Naive thymus-derived CD4-positive, alpha-beta T cell (primary cell): ENCODE measurements at regions of chr3 and their contacts with region 1.

Region 1: DNA sequence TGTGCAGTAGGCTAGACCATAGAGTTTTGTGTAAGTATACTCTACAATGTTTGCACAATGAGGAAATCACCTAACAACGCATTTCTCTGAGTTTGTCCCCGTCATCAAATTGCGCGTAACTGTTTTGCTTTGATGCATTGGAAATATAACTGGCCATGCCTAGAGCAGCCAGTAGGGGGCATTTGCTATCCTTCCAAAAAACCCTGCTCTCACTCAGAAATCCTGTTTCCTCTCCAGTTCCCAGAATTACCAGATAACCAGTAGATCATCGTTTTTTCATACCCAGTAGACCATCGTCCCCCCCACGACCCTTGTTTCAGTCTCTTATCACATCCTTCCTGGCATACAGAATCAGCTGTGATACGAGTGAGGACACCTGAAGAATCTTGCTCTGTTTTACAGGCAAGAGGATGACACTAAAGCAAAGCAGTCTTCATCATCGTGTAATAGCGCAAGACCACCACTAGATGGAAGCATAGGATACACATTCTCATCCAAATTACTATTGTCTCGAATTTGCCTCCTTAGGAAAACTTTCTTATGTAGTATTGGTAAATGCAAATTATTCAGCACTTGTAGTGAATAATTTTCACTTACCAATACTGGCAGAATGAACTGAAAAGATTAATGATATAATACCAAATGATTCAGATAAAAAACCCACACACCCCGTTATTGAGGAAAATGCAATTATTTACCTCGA is 4.4 kb upstream of the GABRR3 start:
- DNase-seq: peak; percentile 51 to 91 (median 89)
- ATAC-seq: peak; percentile 98
- H3K4me3 ChIP-seq: peak overlapping the region; percentile 59
- H3K4me3 Mint-ChIP-seq: peak overlapping the region; percentile 11 to 95 (median 85)
- H3K27ac ChIP-seq: peak overlapping the region; percentile 75
- H3K27ac Mint-ChIP-seq: peak overlapping the region; percentile 57 to 99 (median 94)
- H3K4me1 ChIP-seq: no peaks in the 10 kb centered on the region
- H3K4me1 Mint-ChIP-seq: peaks cover 0 to 22% (median 0%) of the 10 kb centered on the region in 7 donors
- H3K27me3 ChIP-seq: peaks cover 0 to 3% of the 10 kb centered on the region in 2 donors
- H3K27me3 Mint-ChIP-seq: peaks cover 0 to 43% (median 17%) of the 10 kb centered on the region in 5 donors

Region 2: DNA sequence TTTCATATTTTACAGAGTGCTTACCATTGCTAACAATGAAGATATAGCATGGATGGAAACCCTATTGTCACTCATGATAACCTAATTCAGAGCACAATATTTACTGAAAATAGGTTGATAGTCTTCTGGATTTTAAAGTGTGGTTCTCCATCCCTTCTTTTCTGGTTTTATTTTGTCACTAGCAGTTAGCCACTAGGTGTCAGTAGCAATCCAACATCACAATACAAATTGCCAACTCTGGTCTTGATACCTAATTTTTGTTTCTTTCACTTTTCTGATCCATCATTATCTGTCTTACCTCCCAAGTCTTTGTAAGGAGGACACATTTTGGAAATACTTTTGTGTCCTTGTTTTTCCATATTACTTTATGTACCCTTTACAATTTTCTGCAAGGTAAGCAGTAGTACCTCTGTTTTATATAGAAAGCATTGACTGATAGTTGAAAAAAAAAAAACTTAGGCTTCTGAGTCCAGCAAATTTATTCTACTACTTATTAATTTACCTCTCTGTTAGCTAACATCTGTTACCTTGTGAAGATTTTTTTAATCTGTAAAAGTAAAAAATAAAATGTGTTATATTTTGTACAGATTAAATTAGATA is 246.0 kb before region 1 on chr3:
- CTCF ChIA-PET with region 1: no interaction called
- POLR2A ChIA-PET with region 1: no interaction called
- intact Hi-C with region 1: loop called in 1 of 2 experiments (anchors 1 kb)
- DNase-seq: peak in 7 of 9 donors; percentile 30 to 67 (median 61)
- ATAC-seq: peak; percentile 80
- H3K4me3 ChIP-seq: no peak overlapping the region
- H3K4me3 Mint-ChIP-seq: no peak overlapping the region
- H3K27ac ChIP-seq: no peak overlapping the region
- H3K27ac Mint-ChIP-seq: no peak overlapping the region
- H3K4me1 ChIP-seq: no peaks in the 10 kb centered on the region
- H3K4me1 Mint-ChIP-seq: peaks cover 0 to 3% (median 0%) of the 10 kb centered on the region in 7 donors
- H3K27me3 ChIP-seq: no peaks in the 10 kb centered on the region
- H3K27me3 Mint-ChIP-seq: no peaks in the 10 kb centered on the region

Region 3: DNA sequence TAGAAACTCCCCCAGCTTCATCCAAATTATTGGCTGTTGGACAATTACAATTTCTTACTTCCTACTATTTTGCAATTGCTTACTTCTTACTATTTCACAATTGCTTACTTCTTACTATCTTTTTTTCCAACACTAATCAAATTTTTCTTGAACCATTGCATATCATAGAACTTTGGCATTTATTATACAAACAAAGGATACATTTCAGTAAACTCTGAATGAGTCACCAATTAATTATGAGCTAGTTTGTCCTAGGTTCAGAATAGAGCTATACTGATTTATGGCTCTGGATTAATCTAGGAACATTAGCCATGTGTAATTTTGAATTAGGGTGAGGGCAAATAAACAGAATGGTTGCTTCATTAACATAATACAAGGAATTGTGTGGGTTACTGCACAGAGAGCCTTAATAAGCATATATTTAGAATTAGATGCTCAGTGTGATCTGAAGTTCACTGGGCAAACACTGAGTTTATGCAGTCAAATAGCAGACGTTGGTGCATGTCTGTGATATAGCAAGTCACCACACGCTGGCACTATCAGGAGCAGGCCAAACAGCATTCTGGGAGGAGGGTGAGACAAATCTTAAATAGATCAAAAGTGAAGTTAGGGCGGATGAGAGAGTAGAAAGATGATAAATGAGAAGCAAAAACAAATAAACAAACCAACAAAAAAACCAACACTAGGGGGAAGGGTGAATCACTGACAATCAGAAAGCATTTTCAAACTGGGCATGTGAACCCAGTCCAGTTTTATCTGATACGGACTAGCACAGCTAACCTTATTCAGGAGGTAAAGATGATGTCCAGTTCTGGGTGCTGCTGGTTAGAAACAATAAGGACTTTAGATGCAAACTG is 25.8 kb before region 1 on chr3:
- CTCF ChIA-PET with region 1: interaction called, 4 read pairs
- POLR2A ChIA-PET with region 1: no interaction called
- intact Hi-C with region 1: loop called in 1 of 2 experiments (anchors 2 kb)
- DNase-seq: no peak
- ATAC-seq: no peak
- H3K4me3 ChIP-seq: no peak overlapping the region
- H3K4me3 Mint-ChIP-seq: no peak overlapping the region
- H3K27ac ChIP-seq: no peak overlapping the region
- H3K27ac Mint-ChIP-seq: no peak overlapping the region
- H3K4me1 ChIP-seq: peaks cover 0 to 4% of the 10 kb centered on the region in 2 donors
- H3K4me1 Mint-ChIP-seq: peaks cover 0 to 31% (median 5%) of the 10 kb centered on the region in 7 donors
- H3K27me3 ChIP-seq: no peaks in the 10 kb centered on the region
- H3K27me3 Mint-ChIP-seq: no peaks in the 10 kb centered on the region

Region 4: GRCh38 chr3:98188545-98188944 is 149.1 kb after region 1 on chr3:
- CTCF ChIA-PET with region 1: no interaction called
- POLR2A ChIA-PET with region 1: no interaction called
- intact Hi-C with region 1: loop called (anchors 2 to 5 kb)
- DNase-seq: peak in 3 of 9 donors; percentile 1 to 10 (median 3)
- ATAC-seq: peak; percentile 66
- H3K4me3 ChIP-seq: no peak overlapping the region
- H3K4me3 Mint-ChIP-seq: no peak overlapping the region
- H3K27ac ChIP-seq: no peak overlapping the region
- H3K27ac Mint-ChIP-seq: no peak overlapping the region
- H3K4me1 ChIP-seq: no peaks in the 10 kb centered on the region
- H3K4me1 Mint-ChIP-seq: peaks cover 0 to 5% (median 1%) of the 10 kb centered on the region in 7 donors
- H3K27me3 ChIP-seq: no peaks in the 10 kb centered on the region
- H3K27me3 Mint-ChIP-seq: peaks cover 8 to 19% (median 12%) of the 10 kb centered on the region in 5 donors

Region 5: DNA sequence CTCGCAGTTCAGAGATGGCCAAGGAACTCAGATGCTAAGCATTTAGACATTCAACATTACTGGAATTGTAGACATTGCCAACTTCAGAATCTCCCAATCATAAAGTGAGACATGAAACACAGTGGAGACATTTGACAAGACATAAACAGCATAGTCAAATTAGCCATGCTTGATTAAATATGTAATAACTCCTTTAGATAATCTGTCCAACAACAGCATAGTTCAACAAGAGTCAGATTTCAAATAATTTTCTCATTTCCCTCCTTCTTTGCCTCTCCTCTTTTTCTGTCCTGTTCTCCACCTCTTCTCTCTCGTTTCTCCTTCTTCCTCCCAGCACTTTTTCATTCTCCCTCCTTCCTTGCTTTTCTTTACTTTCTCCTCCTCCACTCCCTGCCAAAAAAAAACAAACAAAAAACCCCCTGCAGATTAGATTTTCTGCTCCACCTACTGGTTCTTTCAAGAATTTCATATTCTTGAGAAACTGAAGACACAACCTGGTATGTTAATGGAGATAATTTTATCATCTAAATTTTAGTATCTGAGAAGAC is 533.8 kb after region 1 on chr3:
- CTCF ChIA-PET with region 1: interaction called, 8 read pairs
- POLR2A ChIA-PET with region 1: no interaction called
- intact Hi-C with region 1: loop called (anchors 1 kb)
- DNase-seq: peak in 1 of 9 donors; percentile 17
- ATAC-seq: peak; percentile 45
- H3K4me3 ChIP-seq: no peak overlapping the region
- H3K4me3 Mint-ChIP-seq: peak overlapping the region in 1 of 10 donors; percentile 59
- H3K27ac ChIP-seq: no peak overlapping the region
- H3K27ac Mint-ChIP-seq: peak overlapping the region in 5 of 9 donors; percentile 2 to 80 (median 65)
- H3K4me1 ChIP-seq: peaks cover 0 to 13% of the 10 kb centered on the region in 2 donors
- H3K4me1 Mint-ChIP-seq: peaks cover 4 to 58% (median 11%) of the 10 kb centered on the region in 7 donors
- H3K27me3 ChIP-seq: no peaks in the 10 kb centered on the region
- H3K27me3 Mint-ChIP-seq: no peaks in the 10 kb centered on the region

Region 6: GRCh38 chr3:98901392-98902350 is 862.2 kb after region 1 on chr3 and contains the start of gene DCBLD2:
- CTCF ChIA-PET with region 1: no interaction called
- POLR2A ChIA-PET with region 1: no interaction called
- intact Hi-C with region 1: loop called (anchors 1 to 5 kb)
- DNase-seq: peak; percentile 90 to 96 (median 94)
- ATAC-seq: peak; percentile 99
- H3K4me3 ChIP-seq: peak within 1 kb of the TSS; percentile 86
- H3K4me3 Mint-ChIP-seq: peak within 1 kb of the TSS; percentile 89 to 97 (median 94)
- H3K27ac ChIP-seq: peak within 1 kb of the TSS; percentile 78
- H3K27ac Mint-ChIP-seq: peak within 1 kb of the TSS; percentile 44 to 96 (median 86)
- H3K4me1 ChIP-seq: peaks cover 5% of the 10 kb centered on the region in 2 donors
- H3K4me1 Mint-ChIP-seq: peaks cover 14 to 27% (median 22%) of the 10 kb centered on the region in 7 donors
- H3K27me3 ChIP-seq: no peaks in the 10 kb centered on the region
- H3K27me3 Mint-ChIP-seq: peaks cover 0 to 30% (median 8%) of the 10 kb centered on the region in 5 donors
- total RNA-seq, gene DCBLD2: 1.9 to 4.7 (median 2.9) TPM